Upper lobe of right lung (tissue), 1 donor: ENCODE measurements at regions of chr15 and their contacts with region 1.

Region 1: GRCh38 chr15:66946578-66947164 is 118.7 kb upstream of the SMAD3 start:
- DNase-seq: peak; percentile 77
- ATAC-seq: peak; percentile 90
- H3K4me3 ChIP-seq: no peak overlapping the region
- H3K27ac ChIP-seq: no peak overlapping the region
- H3K4me1 ChIP-seq: no peaks in the 10 kb centered on the region
- H3K27me3 ChIP-seq: no peaks in the 10 kb centered on the region
- CTCF ChIP-seq: peak; percentile 95

Region 2: GRCh38 chr15:67076147-67076843 is 129.6 kb after region 1 on chr15:
- intact Hi-C with region 1: no loop called
- DNase-seq: no peak
- ATAC-seq: no peak
- H3K4me3 ChIP-seq: no peak overlapping the region
- H3K27ac ChIP-seq: no peak overlapping the region
- H3K4me1 ChIP-seq: peaks cover 68% of the 10 kb centered on the region
- H3K27me3 ChIP-seq: no peaks in the 10 kb centered on the region
- CTCF ChIP-seq: no peak

Region 3: GRCh38 chr15:67303490-67304363 is 357.1 kb after region 1 on chr15:
- intact Hi-C with region 1: loop called (anchors 10 kb)
- DNase-seq: no peak
- ATAC-seq: peak; percentile 53
- H3K4me3 ChIP-seq: no peak overlapping the region
- H3K27ac ChIP-seq: no peak overlapping the region
- H3K4me1 ChIP-seq: no peaks in the 10 kb centered on the region
- H3K27me3 ChIP-seq: no peaks in the 10 kb centered on the region
- CTCF ChIP-seq: peak; percentile 57

Region 4: GRCh38 chr15:67433495-67434099 is 486.9 kb after region 1 on chr15:
- intact Hi-C with region 1: loop called (anchors 10 kb)
- DNase-seq: no peak
- ATAC-seq: peak; percentile 93
- H3K4me3 ChIP-seq: no peak overlapping the region
- H3K27ac ChIP-seq: no peak overlapping the region
- H3K4me1 ChIP-seq: no peaks in the 10 kb centered on the region
- H3K27me3 ChIP-seq: no peaks in the 10 kb centered on the region
- CTCF ChIP-seq: peak; percentile 81

Region 5: DNA sequence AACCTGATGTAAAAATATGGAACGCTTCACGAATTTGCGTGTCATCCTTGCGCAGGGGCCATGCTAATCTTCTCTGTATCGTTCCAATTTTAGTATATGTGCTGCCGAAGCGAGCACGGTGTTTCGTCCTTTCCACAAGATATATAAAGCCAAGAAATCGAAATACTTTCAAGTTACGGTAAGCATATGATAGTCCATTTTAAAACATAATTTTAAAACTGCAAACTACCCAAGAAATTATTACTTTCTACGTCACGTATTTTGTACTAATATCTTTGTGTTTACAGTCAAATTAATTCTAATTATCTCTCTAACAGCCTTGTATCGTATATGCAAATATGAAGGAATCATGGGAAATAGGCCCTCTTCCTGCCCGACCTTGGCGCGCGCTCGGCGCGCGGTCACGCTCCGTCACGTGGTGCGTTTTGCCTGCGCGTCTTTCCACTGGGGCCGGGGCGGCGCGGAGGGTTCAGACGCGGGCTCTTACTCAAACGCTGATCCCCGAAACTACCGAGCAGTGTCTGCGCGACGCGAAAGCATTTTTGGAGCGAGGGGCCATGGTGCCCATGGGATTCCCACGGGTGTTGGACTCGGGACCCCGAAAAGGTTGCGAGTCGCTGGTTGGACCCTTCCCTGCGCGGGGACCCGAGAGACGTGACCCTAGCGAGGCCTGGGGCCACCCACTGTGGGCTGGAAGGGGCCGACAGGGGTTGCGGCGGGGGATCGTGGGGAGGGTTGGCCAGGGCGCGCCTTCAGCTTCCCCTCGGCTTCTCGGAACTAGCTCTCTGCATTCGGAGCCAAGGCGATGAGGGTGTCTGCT is 893.5 kb after region 1 on chr15 and contains the start of gene RNU6-1:
- intact Hi-C with region 1: loop called (anchors 10 kb)
- DNase-seq: peak; percentile 97
- ATAC-seq: peak; percentile 88
- H3K4me3 ChIP-seq: peak within 1 kb of the TSS; percentile 91
- H3K27ac ChIP-seq: peak within 1 kb of the TSS; percentile 98
- H3K4me1 ChIP-seq: peaks cover 33% of the 10 kb centered on the region
- H3K27me3 ChIP-seq: peaks cover 11% of the 10 kb centered on the region
- CTCF ChIP-seq: no peak
- total RNA-seq, gene RNU6-1: not detected